ENCODE measurements at regions of chr17 and their contacts with region 1.

Region 1: DNA sequence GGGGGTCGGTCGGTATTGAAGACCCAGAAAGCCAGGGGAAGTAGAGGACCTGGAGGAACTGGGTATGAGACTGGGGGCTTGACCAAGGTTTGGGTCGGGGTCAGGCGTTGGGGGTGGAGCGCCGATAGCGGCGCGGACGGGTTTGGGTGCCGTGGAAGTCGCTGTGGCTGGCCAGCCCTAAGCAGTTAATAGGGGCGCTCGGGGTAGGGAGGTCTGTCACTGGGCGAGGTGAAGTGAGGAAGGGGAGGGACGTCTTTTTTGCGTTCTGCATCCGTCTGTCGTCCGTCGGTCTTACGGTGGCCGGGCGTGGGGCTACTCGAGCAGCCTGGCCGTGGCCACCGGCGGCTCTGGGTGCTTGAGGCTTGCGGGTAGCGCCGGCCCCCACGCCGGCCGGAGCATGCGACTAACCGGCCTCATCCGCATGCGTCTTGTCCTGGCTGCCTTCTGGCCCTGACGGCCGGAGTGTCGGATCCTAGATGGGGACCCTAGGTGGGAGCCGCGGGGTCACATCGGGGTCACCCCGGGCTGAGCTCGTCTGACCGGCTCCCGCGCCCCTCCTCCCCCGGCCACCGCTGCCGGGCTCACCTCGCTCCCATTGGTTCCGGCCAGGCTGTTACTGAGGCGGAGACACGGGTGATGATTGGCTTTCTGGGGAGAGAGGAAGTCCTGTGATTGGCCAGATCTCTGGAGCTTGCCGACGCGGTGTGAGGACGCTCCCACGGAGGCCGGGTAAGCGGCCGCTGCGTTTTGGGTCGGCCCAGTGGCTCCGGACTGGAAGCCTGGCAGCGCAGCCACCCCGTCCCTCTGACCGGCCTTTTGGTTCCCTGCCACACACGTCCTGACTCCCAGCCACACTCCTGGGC is 10.3 kb upstream of the TMEM88 start:
- DNase-seq: peak; percentile 82 to 90 (median 87)
- H3K4me3 ChIP-seq: peak overlapping the region; percentile 83
- H3K27ac ChIP-seq: peak overlapping the region; percentile 86 to 90
- H3K4me1 ChIP-seq: peaks cover 9% of the 10 kb centered on the region
- H3K27me3 ChIP-seq: no peaks in the 10 kb centered on the region
- CTCF ChIP-seq: no peak
- EP300 ChIP-seq: no peak
- POLR2A ChIP-seq: peak; percentile 71

Region 2: DNA sequence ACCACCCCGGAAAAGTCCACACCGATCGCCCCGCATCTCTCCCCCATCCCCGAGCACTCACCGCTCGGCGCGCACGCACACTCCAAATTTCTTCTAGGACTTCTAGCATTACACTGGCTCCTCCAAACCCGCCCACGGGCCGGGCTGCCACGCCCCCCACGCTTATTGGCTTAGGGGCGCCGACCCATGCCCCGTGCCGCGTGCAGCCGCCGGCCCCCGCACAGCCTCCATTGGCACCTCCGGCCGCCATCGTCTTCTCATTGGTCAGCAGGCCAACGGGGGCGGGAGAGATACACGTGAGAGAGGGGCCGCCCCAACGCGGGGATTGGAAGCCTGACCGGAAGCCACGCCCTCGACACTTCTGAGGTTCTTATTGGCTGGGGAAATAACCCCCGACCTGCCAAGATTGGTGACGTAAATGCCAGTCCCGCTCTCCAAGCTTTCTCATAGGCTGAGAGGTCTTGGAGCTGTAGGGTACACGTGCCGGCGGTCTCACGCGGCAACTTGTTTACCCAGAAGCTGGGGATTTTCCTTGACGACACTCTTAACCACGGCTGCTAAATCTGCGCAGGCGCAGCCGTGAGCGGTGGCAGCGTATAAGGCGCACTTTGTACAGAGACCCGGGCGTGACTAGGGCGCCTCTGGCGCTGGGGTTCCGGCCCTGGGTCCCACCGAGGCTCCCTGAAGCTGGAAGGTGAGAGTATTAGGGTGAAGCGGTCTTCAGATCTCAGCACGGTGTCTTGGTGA is 311.9 kb after region 1 on chr17:
- intact Hi-C with region 1: loop called in 1 of 4 experiments (anchors 10 kb)
- DNase-seq: peak; percentile 100
- H3K4me3 ChIP-seq: peak overlapping the region; percentile 97
- H3K27ac ChIP-seq: peak overlapping the region; percentile 94 to 96
- H3K4me1 ChIP-seq: peaks cover 10% of the 10 kb centered on the region
- H3K27me3 ChIP-seq: no peaks in the 10 kb centered on the region
- CTCF ChIP-seq: no peak
- EP300 ChIP-seq: peak; percentile 98
- POLR2A ChIP-seq: peak; percentile 100